CD4-positive, alpha-beta memory T cell (primary cell): ENCODE measurements at regions of chr17 and their contacts with region 1.

Region 1: GRCh38 chr17:80008383-80008840 is 27.3 kb downstream of the TBC1D16 start:
- DNase-seq: peak; percentile 54 to 72 (median 62)
- H3K4me3 ChIP-seq: no peak overlapping the region
- H3K4me3 Mint-ChIP-seq: peak overlapping the region in 1 of 8 donors; percentile 6
- H3K27ac ChIP-seq: no peak overlapping the region
- H3K27ac Mint-ChIP-seq: no peak overlapping the region
- H3K4me1 ChIP-seq: peaks cover 6% of the 10 kb centered on the region
- H3K4me1 Mint-ChIP-seq: peaks cover 1 to 14% (median 6%) of the 10 kb centered on the region in 4 donors
- H3K27me3 ChIP-seq: no peaks in the 10 kb centered on the region
- H3K27me3 Mint-ChIP-seq: no peaks in the 10 kb centered on the region

Region 2: GRCh38 chr17:80082403-80083135 is 74.2 kb after region 1 on chr17:
- CTCF ChIA-PET with region 1: interaction called, 10 read pairs
- POLR2A ChIA-PET with region 1: no interaction called
- intact Hi-C with region 1: loop called (anchors 10 kb)
- DNase-seq: peak; percentile 50 to 67 (median 60)
- H3K4me3 ChIP-seq: no peak overlapping the region
- H3K4me3 Mint-ChIP-seq: no peak overlapping the region
- H3K27ac ChIP-seq: no peak overlapping the region
- H3K27ac Mint-ChIP-seq: peak overlapping the region in 1 of 7 donors; percentile 52
- H3K4me1 ChIP-seq: peaks cover 6% of the 10 kb centered on the region
- H3K4me1 Mint-ChIP-seq: peaks cover 0 to 6% (median 3%) of the 10 kb centered on the region in 4 donors
- H3K27me3 ChIP-seq: no peaks in the 10 kb centered on the region
- H3K27me3 Mint-ChIP-seq: peaks cover 5 to 7% of the 10 kb centered on the region in 2 donors

Region 3: DNA sequence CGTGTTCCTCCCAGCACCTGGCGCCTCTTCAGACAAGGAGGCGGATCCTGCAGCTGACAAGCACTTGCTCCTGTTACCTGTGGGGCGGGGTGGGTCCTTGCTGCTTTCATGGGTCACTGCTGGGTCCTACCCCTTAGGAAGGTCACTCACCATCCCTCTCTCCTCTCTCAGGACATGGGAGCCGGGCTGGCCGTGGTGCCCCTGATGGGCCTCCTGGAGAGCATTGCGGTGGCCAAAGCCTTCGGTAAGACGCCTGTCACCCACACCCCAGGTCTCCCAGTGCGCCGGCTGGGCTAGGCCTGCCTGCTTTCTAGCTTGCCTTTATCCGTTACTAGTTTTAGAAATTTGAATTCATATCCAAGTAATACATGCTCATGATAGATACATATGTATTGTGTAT is 228.9 kb after region 1 on chr17:
- CTCF ChIA-PET with region 1: no interaction called
- POLR2A ChIA-PET with region 1: no interaction called
- intact Hi-C with region 1: no loop called
- DNase-seq: no peak
- H3K4me3 ChIP-seq: no peak overlapping the region
- H3K4me3 Mint-ChIP-seq: no peak overlapping the region
- H3K27ac ChIP-seq: no peak overlapping the region
- H3K27ac Mint-ChIP-seq: no peak overlapping the region
- H3K4me1 ChIP-seq: no peaks in the 10 kb centered on the region
- H3K4me1 Mint-ChIP-seq: peaks cover 0 to 2% (median 0%) of the 10 kb centered on the region in 4 donors
- H3K27me3 ChIP-seq: no peaks in the 10 kb centered on the region
- H3K27me3 Mint-ChIP-seq: no peaks in the 10 kb centered on the region